Sciatic nerve (tissue), 2 donors: ENCODE measurements at regions of chr16 and their contacts with region 1.

Region 1: GRCh38 chr16:11396241-11397048 is 51.2 kb downstream of the RMI2 start:
- DNase-seq: peak; percentile 90
- ATAC-seq: peak; percentile 93

Region 2: GRCh38 chr16:11497851-11498289 is 101.4 kb after region 1 on chr16:
- intact Hi-C with region 1: no loop called
- DNase-seq: no peak
- ATAC-seq: peak; percentile 27

Region 3: GRCh38 chr16:11651796-11652195 is 255.4 kb after region 1 on chr16:
- intact Hi-C with region 1: loop called (anchors 5 kb)
- DNase-seq: no peak
- ATAC-seq: no peak

Region 4: GRCh38 chr16:11711662-11712061 is 315.2 kb after region 1 on chr16:
- intact Hi-C with region 1: loop called (anchors 5 kb)
- DNase-seq: no peak
- ATAC-seq: no peak